WTC11 (cell line): ENCODE measurements at regions of chr19 and their contacts with region 1.

Region 1: GRCh38 chr19:15251749-15252397 is 19.6 kb upstream of the EPHX3 start:
- DNase-seq: peak; percentile 83
- ATAC-seq: peak; percentile 91
- H3K4me3 Mint-ChIP-seq: no peak overlapping the region
- H3K27ac Mint-ChIP-seq: peak overlapping the region; percentile 89
- H3K4me1 Mint-ChIP-seq: peaks cover 16% of the 10 kb centered on the region
- H3K27me3 Mint-ChIP-seq: no peaks in the 10 kb centered on the region
- CTCF ChIP-seq: no peak

Region 2: DNA sequence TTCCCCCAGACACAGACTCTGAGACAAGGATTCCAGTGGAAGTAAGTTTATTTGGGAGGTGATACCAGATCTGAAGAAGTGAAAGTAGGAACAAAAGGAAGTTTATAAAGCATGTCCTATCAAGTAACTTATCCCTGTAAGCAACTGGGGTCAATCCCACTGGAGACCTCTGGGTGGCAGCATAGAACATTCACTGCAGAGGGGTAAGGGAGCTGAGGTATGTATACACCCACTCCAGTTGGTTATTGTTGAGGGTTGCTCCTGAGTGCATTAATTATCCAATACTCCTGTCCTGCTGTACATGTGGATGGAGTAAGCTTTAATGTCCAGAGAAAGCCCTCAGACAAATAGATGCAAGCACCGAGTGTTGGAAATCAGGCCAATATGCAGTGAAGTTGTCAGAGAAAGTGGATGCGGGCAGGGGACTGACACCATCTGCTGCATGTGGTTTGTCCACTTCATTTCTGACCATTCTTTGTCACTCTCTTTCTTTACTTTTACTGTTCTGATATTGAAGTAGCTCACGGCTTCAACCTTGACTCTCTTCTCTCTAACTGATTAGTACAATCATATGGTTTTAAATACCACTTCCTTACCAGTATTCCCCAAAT is 97.8 kb before region 1 on chr19:
- CTCF ChIA-PET with region 1: interaction called, 21 read pairs
- POLR2A ChIA-PET with region 1: no interaction called
- DNase-seq: peak; percentile 82
- ATAC-seq: peak; percentile 75
- H3K4me3 Mint-ChIP-seq: no peak overlapping the region
- H3K27ac Mint-ChIP-seq: no peak overlapping the region
- H3K4me1 Mint-ChIP-seq: no peaks in the 10 kb centered on the region; the same call in 1 of the 2 replicates
- H3K27me3 Mint-ChIP-seq: peaks cover 3% of the 10 kb centered on the region; the same call in 1 of the 2 replicates
- CTCF ChIP-seq: peak; percentile 55

Region 3: GRCh38 chr19:15195371-15196334 is 56.2 kb before region 1 on chr19:
- CTCF ChIA-PET with region 1: interaction called, 28 read pairs
- POLR2A ChIA-PET with region 1: no interaction called
- DNase-seq: peak; percentile 97
- ATAC-seq: peak; percentile 58
- H3K4me3 Mint-ChIP-seq: peak overlapping the region; percentile 77
- H3K27ac Mint-ChIP-seq: 0 out of 2 replicates have a peak overlapping the region, but pooled peaks have one; percentile 70
- H3K4me1 Mint-ChIP-seq: peaks cover 31% of the 10 kb centered on the region
- H3K27me3 Mint-ChIP-seq: no peaks in the 10 kb centered on the region
- CTCF ChIP-seq: no peak

Region 4: DNA sequence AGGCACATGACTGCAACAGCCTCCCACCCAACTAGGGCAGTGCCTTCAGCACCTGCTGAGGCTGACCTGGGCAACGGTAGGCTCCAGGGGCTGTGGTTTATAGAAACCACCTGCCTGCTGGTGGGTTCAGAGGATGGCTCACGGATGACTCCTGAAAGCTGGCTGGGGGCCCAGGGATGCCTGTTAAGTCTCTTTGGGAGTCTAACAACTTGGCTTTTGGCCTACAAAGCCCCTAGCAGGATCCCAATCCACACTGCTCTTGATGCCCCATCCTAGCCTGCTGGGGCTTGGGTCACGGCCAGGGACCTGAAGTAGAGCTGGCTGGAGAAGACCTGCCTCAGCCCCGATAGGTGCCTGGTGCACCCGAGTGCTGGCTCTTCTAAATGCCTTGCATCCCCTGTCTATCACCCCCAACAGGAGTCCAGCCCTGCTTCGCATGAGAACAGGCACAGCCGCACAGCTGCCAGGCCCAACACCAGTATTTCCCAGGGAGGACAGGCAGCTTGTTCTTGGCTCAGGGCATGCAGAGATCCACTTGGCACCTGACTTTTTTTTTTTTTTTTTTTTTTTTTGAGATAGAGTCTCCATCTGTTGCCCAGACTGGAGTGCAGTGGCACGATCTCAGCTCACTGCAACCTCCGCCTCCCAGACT is 10.5 kb before region 1 on chr19:
- CTCF ChIA-PET with region 1: interaction called, 54 read pairs
- POLR2A ChIA-PET with region 1: no interaction called
- DNase-seq: no peak
- ATAC-seq: no peak
- H3K4me3 Mint-ChIP-seq: no peak overlapping the region
- H3K27ac Mint-ChIP-seq: no peak overlapping the region
- H3K4me1 Mint-ChIP-seq: no peaks in the 10 kb centered on the region
- H3K27me3 Mint-ChIP-seq: no peaks in the 10 kb centered on the region
- CTCF ChIP-seq: no peak

Region 5: GRCh38 chr19:15280048-15280750 is 28.3 kb after region 1 on chr19:
- CTCF ChIA-PET with region 1: interaction called, 10 read pairs
- POLR2A ChIA-PET with region 1: no interaction called
- DNase-seq: no peak
- ATAC-seq: no peak
- H3K4me3 Mint-ChIP-seq: no peak overlapping the region
- H3K27ac Mint-ChIP-seq: peak overlapping the region; percentile 30
- H3K4me1 Mint-ChIP-seq: peaks cover 75% of the 10 kb centered on the region
- H3K27me3 Mint-ChIP-seq: no peaks in the 10 kb centered on the region
- CTCF ChIP-seq: no peak